Activated T-helper 1 cell treated with anti-CD3 and anti-CD28 coated beads, Interleukin-12 subunit alpha, Interleukin-12 subunit beta, Interleukin-2, Interleukin-4 antibody, amounts not matched to agents 30 ng/mL and 10 ng/mL and 1 ng/mL, durations not matched to agents 14 hours and 24 hours and 36 hours (primary cell): ENCODE measurements at regions of chr10 and their contacts with region 1.

Region 1: DNA sequence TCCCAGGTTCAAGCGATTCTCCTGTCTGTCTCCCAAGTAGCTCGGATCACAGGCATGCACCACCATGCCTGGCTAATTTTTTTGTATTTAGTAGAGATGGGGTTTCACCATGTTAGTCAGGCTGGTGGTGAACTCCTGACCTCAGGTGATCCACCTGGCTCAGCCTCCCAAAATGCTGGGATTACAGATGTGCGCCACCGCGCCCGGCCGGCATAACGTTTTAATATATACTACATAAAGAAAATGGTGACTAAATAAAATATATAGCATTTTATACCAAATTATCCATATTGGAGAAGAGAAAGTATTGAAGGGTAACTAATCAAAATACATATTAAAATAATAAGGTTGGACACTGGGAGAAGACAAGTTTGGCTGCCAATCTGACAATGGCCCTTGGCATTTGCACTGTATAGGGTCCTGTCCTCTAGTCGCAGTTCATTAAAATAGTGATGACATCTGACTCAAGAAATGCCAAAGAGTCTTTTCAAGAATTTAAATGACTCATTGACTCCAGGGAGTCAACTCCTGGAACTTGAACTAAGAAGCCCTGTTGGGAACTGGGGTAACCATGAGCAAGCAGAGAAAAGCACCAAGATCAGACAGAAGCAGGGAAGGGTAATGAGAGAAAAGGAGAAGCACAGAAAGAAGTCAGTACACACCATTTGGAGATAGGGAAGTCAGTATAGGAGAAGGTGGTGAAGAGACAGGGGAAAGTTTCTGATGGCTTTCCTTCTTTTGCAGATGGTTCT is 91.1 kb downstream of the CH25H start:
- DNase-seq: no peak
- H3K4me3 Mint-ChIP-seq: no peak overlapping the region
- H3K27ac Mint-ChIP-seq: no peak overlapping the region
- H3K4me1 Mint-ChIP-seq: no peaks in the 10 kb centered on the region
- H3K27me3 Mint-ChIP-seq: peaks cover 47% of the 10 kb centered on the region

Region 2: GRCh38 chr10:89129911-89130310 is 13.9 kb after region 1 on chr10:
- intact Hi-C with region 1: loop called (anchors 2 kb)
- DNase-seq: no peak
- H3K4me3 Mint-ChIP-seq: no peak overlapping the region
- H3K27ac Mint-ChIP-seq: no peak overlapping the region
- H3K4me1 Mint-ChIP-seq: no peaks in the 10 kb centered on the region
- H3K27me3 Mint-ChIP-seq: peaks cover 31% of the 10 kb centered on the region

Region 3: GRCh38 chr10:89873055-89873454 is 757.0 kb after region 1 on chr10:
- intact Hi-C with region 1: no loop called
- DNase-seq: no peak
- H3K4me3 Mint-ChIP-seq: no peak overlapping the region
- H3K27ac Mint-ChIP-seq: no peak overlapping the region
- H3K4me1 Mint-ChIP-seq: no peaks in the 10 kb centered on the region
- H3K27me3 Mint-ChIP-seq: peaks cover 7% of the 10 kb centered on the region